ENCODE measurements at regions of chr4 and their contacts with region 1.

Region 1: DNA sequence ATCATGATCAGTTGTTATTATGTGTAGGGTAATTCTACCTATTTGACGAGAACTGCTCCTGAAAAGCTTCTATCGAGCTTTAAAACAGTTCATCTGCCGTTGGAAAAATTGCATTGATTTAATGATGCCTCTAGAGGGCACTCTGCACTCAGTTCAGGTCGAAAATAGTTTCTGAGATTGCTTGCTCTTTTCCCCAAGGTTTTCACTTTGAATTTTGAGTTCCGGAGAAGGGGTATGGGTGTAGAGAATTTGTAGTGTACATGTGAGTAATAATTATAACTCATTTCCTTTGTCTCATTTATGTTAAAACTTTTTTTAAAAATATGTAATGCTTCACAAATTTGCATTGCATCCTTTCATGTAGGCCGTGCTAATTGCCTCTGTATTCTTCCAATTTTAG is 28.4 kb upstream of the TNIP3 start:
- DNase-seq: peak in 2 of 5 donors; percentile 37 to 38
- H3K4me3 ChIP-seq: peak overlapping the region; percentile 52
- H3K4me3 Mint-ChIP-seq: peak overlapping the region; percentile 14 to 79 (median 69)
- H3K27ac ChIP-seq: no peak overlapping the region
- H3K27ac Mint-ChIP-seq: peak overlapping the region in 7 of 8 donors; percentile 43 to 90 (median 77)
- H3K4me1 ChIP-seq: peaks cover 55% of the 10 kb centered on the region
- H3K4me1 Mint-ChIP-seq: peaks cover 59 to 80% (median 77%) of the 10 kb centered on the region in 3 donors
- H3K27me3 ChIP-seq: no peaks in the 10 kb centered on the region
- H3K27me3 Mint-ChIP-seq: no peaks in the 10 kb centered on the region

Region 2: GRCh38 chr4:121156822-121157769 is 35.4 kb before region 1 on chr4:
- CTCF ChIA-PET with region 1: interaction called, 11 read pairs
- POLR2A ChIA-PET with region 1: no interaction called
- DNase-seq: peak in 3 of 5 donors; percentile 6 to 49 (median 47)
- H3K4me3 ChIP-seq: peak overlapping the region; percentile 60
- H3K4me3 Mint-ChIP-seq: peak overlapping the region; percentile 40 to 95 (median 92)
- H3K27ac ChIP-seq: no peak overlapping the region
- H3K27ac Mint-ChIP-seq: peak overlapping the region; percentile 13 to 95 (median 80)
- H3K4me1 ChIP-seq: peaks cover 53% of the 10 kb centered on the region
- H3K4me1 Mint-ChIP-seq: peaks cover 46 to 62% (median 57%) of the 10 kb centered on the region in 3 donors
- H3K27me3 ChIP-seq: no peaks in the 10 kb centered on the region
- H3K27me3 Mint-ChIP-seq: no peaks in the 10 kb centered on the region

Region 3: DNA sequence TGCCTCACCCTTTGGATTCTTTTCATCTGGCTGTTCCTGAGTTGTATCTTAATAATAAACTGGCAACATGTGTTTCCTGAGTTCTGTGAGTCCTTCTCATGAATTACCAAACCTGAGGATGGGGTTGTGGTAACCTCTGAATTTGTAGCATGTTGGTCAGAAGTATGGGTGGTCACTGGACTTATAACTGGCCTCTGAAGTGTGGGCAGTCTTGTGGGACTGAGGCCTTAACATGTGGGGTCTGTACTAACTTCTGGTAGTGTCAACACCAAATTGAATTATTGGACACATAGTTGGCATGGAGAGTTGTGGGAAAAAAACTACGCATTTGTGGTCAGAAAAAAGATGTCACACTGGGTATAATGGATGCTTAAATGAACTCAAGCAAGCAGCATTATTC is 16.7 kb after region 1 on chr4:
- CTCF ChIA-PET with region 1: interaction called, 11 read pairs
- POLR2A ChIA-PET with region 1: no interaction called
- DNase-seq: no peak
- H3K4me3 ChIP-seq: no peak overlapping the region
- H3K4me3 Mint-ChIP-seq: no peak overlapping the region
- H3K27ac ChIP-seq: no peak overlapping the region
- H3K27ac Mint-ChIP-seq: peak overlapping the region in 1 of 8 donors; percentile 4
- H3K4me1 ChIP-seq: no peaks in the 10 kb centered on the region
- H3K4me1 Mint-ChIP-seq: peaks cover 4 to 46% (median 16%) of the 10 kb centered on the region in 3 donors
- H3K27me3 ChIP-seq: no peaks in the 10 kb centered on the region
- H3K27me3 Mint-ChIP-seq: no peaks in the 10 kb centered on the region

Region 4: DNA sequence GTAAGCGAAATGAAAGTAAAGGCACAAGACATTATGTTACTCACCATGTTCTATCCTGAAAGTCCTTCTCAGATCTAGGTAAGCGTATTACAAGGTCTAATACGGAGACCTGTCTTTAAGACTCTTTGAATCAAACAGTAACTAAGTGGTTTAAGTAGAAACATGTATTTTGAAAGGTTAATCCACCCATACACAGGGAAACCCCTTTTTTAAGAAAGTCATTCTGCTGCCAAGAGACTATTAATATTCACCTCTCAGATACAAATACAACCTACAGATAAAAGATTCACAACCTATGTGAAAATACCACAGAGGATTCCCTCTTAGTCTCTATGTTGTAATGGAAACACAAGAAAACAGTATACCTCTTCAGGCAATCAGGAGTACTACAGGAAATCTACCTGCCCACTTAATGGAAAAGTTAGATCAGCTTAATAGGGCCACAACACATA is 34.9 kb after region 1 on chr4:
- CTCF ChIA-PET with region 1: interaction called, 39 read pairs
- POLR2A ChIA-PET with region 1: no interaction called
- DNase-seq: peak in 1 of 5 donors; percentile 34
- H3K4me3 ChIP-seq: peak overlapping the region; percentile 42
- H3K4me3 Mint-ChIP-seq: peak overlapping the region; percentile 72 to 96 (median 83)
- H3K27ac ChIP-seq: peak overlapping the region; percentile 22
- H3K27ac Mint-ChIP-seq: peak overlapping the region; percentile 77 to 97 (median 88)
- H3K4me1 ChIP-seq: peaks cover 31% of the 10 kb centered on the region
- H3K4me1 Mint-ChIP-seq: peaks cover 33 to 51% (median 42%) of the 10 kb centered on the region in 3 donors
- H3K27me3 ChIP-seq: no peaks in the 10 kb centered on the region
- H3K27me3 Mint-ChIP-seq: no peaks in the 10 kb centered on the region

Region 5: GRCh38 chr4:121252224-121252806 is 59.8 kb after region 1 on chr4:
- CTCF ChIA-PET with region 1: interaction called, 78 read pairs
- POLR2A ChIA-PET with region 1: interaction called, 5 read pairs
- DNase-seq: peak; percentile 36 to 72 (median 39)
- H3K4me3 ChIP-seq: no peak overlapping the region
- H3K4me3 Mint-ChIP-seq: peak overlapping the region in 3 of 7 donors; percentile 2 to 67 (median 36)
- H3K27ac ChIP-seq: no peak overlapping the region
- H3K27ac Mint-ChIP-seq: peak overlapping the region; percentile 48 to 86 (median 78)
- H3K4me1 ChIP-seq: peaks cover 50% of the 10 kb centered on the region
- H3K4me1 Mint-ChIP-seq: peaks cover 50 to 71% (median 65%) of the 10 kb centered on the region in 3 donors
- H3K27me3 ChIP-seq: no peaks in the 10 kb centered on the region
- H3K27me3 Mint-ChIP-seq: no peaks in the 10 kb centered on the region